Activated CD4-positive, alpha-beta T cell treated with anti-CD3 and anti-CD28 coated beads, Interleukin-2, amount 10 ng/mL, durations not matched to agents 24 days and 14 days (primary cell): ENCODE measurements at regions of chr11 and their contacts with region 1.

Region 1: GRCh38 chr11:72112321-72113219 is at the start of gene ANAPC15:
- DNase-seq: peak; percentile 100
- H3K4me3 Mint-ChIP-seq: peak within 1 kb of the TSS; percentile 98
- H3K27ac Mint-ChIP-seq: peak within 1 kb of the TSS; percentile 99
- H3K4me1 Mint-ChIP-seq: peaks cover 18% of the 10 kb centered on the region
- H3K27me3 Mint-ChIP-seq: no peaks in the 10 kb centered on the region
- total RNA-seq, gene ANAPC15: 52.1 and 54.9 TPM in 2 replicates

Region 2: GRCh38 chr11:72040726-72041441 is 71.7 kb before region 1 on chr11:
- intact Hi-C with region 1: loop called (anchors 2 kb)
- DNase-seq: peak; percentile 90
- H3K4me3 Mint-ChIP-seq: no peak overlapping the region
- H3K27ac Mint-ChIP-seq: no peak overlapping the region
- H3K4me1 Mint-ChIP-seq: peaks cover 37% of the 10 kb centered on the region
- H3K27me3 Mint-ChIP-seq: no peaks in the 10 kb centered on the region

Region 3: DNA sequence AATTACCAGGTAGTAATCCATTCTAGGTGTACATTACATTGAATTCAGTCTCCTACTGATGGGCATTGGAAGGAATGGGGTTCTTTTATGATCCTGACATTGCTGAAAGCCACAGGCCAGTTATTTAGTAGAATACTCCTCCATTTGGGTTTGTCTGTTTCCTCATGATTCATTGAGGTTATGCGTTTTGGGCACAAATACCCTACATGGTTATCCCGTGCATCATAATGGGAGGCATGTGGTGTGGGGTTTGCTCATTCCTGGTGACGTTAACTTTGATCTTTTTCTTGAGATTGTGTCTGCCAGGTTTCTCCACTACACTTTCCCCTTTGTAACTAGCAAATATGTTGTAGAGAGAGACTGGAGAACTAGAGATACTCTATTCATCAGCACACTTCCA is 28.5 kb after region 1 on chr11:
- intact Hi-C with region 1: loop called (anchors 1 kb)
- DNase-seq: peak; percentile 70
- H3K4me3 Mint-ChIP-seq: peak overlapping the region; percentile 18
- H3K27ac Mint-ChIP-seq: peak overlapping the region; percentile 60
- H3K4me1 Mint-ChIP-seq: peaks cover 27% of the 10 kb centered on the region
- H3K27me3 Mint-ChIP-seq: peaks cover 2% of the 10 kb centered on the region